ENCODE measurements at regions of chr9 and their contacts with region 1.

Region 1: DNA sequence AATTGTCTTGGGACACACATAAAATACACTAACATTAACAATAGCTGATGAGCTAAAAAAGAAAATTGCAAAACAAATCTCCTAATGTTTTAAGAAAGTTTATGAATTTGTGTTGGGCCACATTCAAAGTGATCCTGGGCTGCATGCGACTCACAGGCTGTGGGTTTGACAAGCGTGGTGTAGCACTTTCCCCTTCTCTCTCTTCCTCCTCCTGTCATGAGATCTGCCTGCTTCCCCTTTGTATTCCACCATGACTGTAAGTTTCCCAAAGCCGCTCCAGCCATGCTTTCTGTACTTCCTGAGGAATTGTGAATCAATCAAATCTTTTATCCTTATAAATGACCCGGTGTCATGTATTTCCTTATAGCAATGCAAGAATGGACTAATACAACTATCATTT is 178.0 kb downstream of the TLR4 start:
- DNase-seq: no peak
- ATAC-seq: no peak
- H3K4me3 ChIP-seq: no peak overlapping the region
- H3K27ac ChIP-seq: no peak overlapping the region
- H3K4me1 ChIP-seq: no peaks in the 10 kb centered on the region
- H3K27me3 ChIP-seq: no peaks in the 10 kb centered on the region
- CTCF ChIP-seq: no peak

Region 2: GRCh38 chr9:117835798-117836197 is 46.4 kb before region 1 on chr9:
- CTCF ChIA-PET with region 1: no interaction called
- POLR2A ChIA-PET with region 1: interaction called, 10 read pairs
- in situ Hi-C with region 1: no loop called
- intact Hi-C with region 1: no loop called
- DNase-seq: no peak
- ATAC-seq: no peak
- H3K4me3 ChIP-seq: no peak overlapping the region
- H3K27ac ChIP-seq: no peak overlapping the region
- H3K4me1 ChIP-seq: no peaks in the 10 kb centered on the region
- H3K27me3 ChIP-seq: no peaks in the 10 kb centered on the region
- CTCF ChIP-seq: no peak

Region 3: GRCh38 chr9:117917873-117918272 is 35.7 kb after region 1 on chr9:
- CTCF ChIA-PET with region 1: no interaction called
- POLR2A ChIA-PET with region 1: no interaction called
- in situ Hi-C with region 1: no loop called
- intact Hi-C with region 1: no loop called
- DNase-seq: no peak
- ATAC-seq: no peak
- H3K4me3 ChIP-seq: no peak overlapping the region
- H3K27ac ChIP-seq: no peak overlapping the region
- H3K4me1 ChIP-seq: no peaks in the 10 kb centered on the region
- H3K27me3 ChIP-seq: no peaks in the 10 kb centered on the region
- CTCF ChIP-seq: no peak

Region 4: DNA sequence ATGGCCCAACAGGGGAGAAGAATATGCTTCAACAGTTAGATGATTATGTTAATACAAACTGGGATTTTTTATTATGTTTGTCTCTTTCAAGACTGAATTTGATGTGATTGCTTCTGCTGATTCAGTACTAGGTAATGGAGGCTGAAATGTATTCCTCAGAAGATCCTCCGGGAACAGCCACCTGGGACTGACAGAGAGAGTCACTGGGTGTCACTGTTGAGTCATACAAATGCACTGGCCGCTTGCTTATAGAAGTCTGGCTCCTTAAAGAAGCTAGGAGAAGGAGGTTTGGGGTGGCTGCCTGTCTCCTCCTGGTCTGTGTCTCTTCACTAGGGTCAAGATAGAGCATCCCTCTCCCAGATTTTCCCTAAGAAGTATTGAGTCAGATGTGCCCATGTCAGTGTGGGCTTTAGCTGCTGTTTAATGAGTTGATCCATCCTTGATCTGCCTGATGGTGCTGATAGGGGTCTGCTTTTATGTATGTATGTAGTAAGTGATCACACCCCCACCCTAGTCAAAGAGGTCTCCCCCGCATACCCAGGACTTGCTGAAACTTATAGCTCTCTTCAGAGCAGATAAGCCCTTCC is 713.6 kb after region 1 on chr9:
- CTCF ChIA-PET with region 1: no interaction called
- POLR2A ChIA-PET with region 1: no interaction called
- in situ Hi-C with region 1: no loop called
- intact Hi-C with region 1: no loop called
- DNase-seq: no peak
- ATAC-seq: peak; percentile 79
- H3K4me3 ChIP-seq: no peak overlapping the region
- H3K27ac ChIP-seq: no peak overlapping the region
- H3K4me1 ChIP-seq: no peaks in the 10 kb centered on the region
- H3K27me3 ChIP-seq: no peaks in the 10 kb centered on the region
- CTCF ChIP-seq: peak; percentile 58